Adrenal gland (tissue), 19 donors: ENCODE measurements at regions of chr10 and their contacts with region 1.

Region 1: GRCh38 chr10:784403-785088 is 95.1 kb upstream of the DIP2C start:
- DNase-seq: peak; percentile 79 to 90 (median 88)
- H3K4me3 ChIP-seq: peak overlapping the region in 1 of 4 donors; percentile 11
- H3K27ac ChIP-seq: peak overlapping the region in 2 of 5 donors; percentile 23 to 41
- H3K4me1 ChIP-seq: peaks cover 7 to 11% of the 10 kb centered on the region in 2 donors
- H3K27me3 ChIP-seq: no peaks in the 10 kb centered on the region
- CTCF ChIP-seq: peak in 2 of 6 experiments; percentile 8 to 28
- POLR2A ChIP-seq: no peak

Region 2: GRCh38 chr10:511101-511848 is 273.3 kb before region 1 on chr10:
- intact Hi-C with region 1: loop called (anchors 5 kb)
- DNase-seq: peak; percentile 94 to 97 (median 95)
- H3K4me3 ChIP-seq: no peak overlapping the region
- H3K27ac ChIP-seq: peak overlapping the region in 1 of 5 donors; percentile 18
- H3K4me1 ChIP-seq: peaks cover 0 to 14% of the 10 kb centered on the region in 2 donors
- H3K27me3 ChIP-seq: no peaks in the 10 kb centered on the region
- CTCF ChIP-seq: peak; percentile 97 to 99 (median 98)
- POLR2A ChIP-seq: no peak

Region 3: DNA sequence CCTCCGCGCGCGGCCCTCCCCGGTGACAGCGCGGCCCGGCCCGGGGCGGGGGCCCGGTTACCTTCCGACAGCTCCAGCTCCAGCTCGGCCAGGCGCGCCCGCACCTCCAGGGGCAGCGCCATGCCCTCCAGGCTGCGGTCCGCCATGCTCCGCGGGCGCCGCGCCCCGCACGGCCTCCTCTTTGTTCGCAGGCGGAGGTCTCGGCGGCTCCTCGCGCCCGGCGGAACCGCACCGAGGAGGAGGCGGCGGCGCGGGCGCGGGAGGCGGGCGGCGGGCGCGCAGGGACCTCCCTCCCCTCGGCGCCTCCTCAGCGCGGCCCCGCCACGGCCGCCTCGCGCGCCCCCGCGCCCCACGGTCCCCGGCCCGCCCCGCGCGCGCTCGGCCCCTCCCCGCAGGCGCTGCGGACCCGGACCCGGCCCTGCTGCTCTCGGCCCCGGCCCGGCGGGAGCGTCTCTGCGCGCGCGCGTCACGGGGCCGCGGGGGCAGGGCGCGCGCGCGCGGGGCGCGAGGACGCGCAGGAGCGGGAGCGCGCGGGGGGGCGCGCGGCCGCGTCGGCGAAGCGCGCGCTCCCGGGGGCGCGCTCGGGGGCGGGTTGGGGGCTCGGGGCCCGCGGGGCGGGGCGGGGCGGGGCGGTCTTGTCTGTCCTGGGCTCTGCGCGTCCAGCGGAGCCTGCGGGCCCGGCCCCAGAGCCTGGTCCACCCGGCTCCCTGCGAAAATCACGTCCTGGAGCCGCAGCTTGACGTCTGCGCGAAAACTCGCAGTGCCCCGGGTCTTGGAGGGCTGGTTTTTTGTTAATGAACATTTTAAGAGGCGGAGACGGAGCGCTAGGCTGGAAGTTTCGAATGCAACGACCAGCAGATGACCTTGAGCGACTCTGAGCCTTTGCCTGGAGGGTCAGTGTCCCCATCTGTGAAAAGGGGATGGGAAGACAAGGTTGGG is 94.8 kb before region 1 on chr10 and contains the start of gene DIP2C:
- intact Hi-C with region 1: no loop called
- DNase-seq: peak; percentile 67 to 83 (median 80)
- H3K4me3 ChIP-seq: peak within 1 kb of the TSS in 3 of 4 donors; percentile 25 to 65 (median 40)
- H3K27ac ChIP-seq: peak within 1 kb of the TSS in 4 of 5 donors; percentile 60 to 91 (median 79)
- H3K4me1 ChIP-seq: peaks cover 3 to 13% of the 10 kb centered on the region in 2 donors
- H3K27me3 ChIP-seq: no peaks in the 10 kb centered on the region
- CTCF ChIP-seq: no peak
- POLR2A ChIP-seq: peak in 1 of 2 donors; percentile 66
- total RNA-seq, gene DIP2C: 4.8 to 23.9 (median 22.0) TPM